ENCODE measurements at regions of chr6 and their contacts with region 1.

Region 1: DNA sequence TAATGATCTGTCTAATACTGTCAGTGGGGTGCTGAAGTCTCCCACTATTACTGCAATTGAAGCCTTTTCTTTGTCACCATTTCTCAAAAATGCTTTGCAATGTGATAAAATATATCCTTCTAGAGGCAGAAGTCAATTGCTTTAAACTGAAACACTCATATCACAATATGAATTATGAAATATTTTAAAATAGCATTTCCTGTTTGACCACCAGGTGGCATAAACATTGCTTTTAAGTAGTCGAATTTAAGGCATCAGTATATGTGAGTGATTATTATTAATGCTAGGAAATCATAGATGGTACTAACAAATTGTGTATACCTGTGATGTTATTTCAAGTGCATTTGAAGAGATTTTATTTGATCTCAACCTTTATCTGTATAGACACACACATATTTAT is 87.5 kb downstream of the MEI4 start:
- DNase-seq: peak; percentile 8
- ATAC-seq: no peak; the same call in 1 of the 2 replicates
- H3K4me3 ChIP-seq: no peak overlapping the region
- H3K27ac ChIP-seq: no peak overlapping the region
- H3K4me1 ChIP-seq: no peaks in the 10 kb centered on the region
- H3K27me3 ChIP-seq: no peaks in the 10 kb centered on the region
- CTCF ChIP-seq: peak; percentile 49
- POLR2A ChIP-seq: no peak
- RAD21 ChIP-seq: peak; percentile 44

Region 2: GRCh38 chr6:77822265-77822664 is 81.9 kb after region 1 on chr6:
- CTCF ChIA-PET with region 1: no interaction called
- POLR2A ChIA-PET with region 1: no interaction called
- dilution Hi-C with region 1: no loop called
- in situ Hi-C with region 1: no loop called
- intact Hi-C with region 1: no loop called
- DNase-seq: no peak
- ATAC-seq: no peak
- H3K4me3 ChIP-seq: no peak overlapping the region
- H3K27ac ChIP-seq: no peak overlapping the region
- H3K4me1 ChIP-seq: no peaks in the 10 kb centered on the region
- H3K27me3 ChIP-seq: no peaks in the 10 kb centered on the region
- CTCF ChIP-seq: no peak
- POLR2A ChIP-seq: no peak
- RAD21 ChIP-seq: no peak

Region 3: DNA sequence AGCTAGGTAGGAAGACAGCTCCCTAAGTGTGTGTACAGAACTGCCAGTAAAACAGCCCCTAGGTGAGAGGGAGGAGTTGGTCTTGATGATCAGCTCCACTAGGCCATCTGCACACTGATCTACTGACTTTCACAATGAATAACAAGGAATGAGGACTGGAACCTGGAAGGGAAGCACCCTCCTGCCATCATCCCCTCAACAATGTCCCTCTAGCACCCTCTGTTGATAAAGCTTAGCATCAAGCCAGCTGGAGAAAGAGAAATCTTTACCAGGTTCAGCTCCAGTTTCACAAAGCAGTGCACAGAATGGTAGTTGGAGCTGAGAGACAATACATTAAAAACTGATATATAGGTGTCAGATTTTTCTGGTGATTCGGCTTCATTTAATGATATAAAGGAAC is 1069.8 kb after region 1 on chr6:
- CTCF ChIA-PET with region 1: interaction called, 3 read pairs
- POLR2A ChIA-PET with region 1: no interaction called
- dilution Hi-C with region 1: no loop called
- in situ Hi-C with region 1: loop called (anchors 25 kb)
- intact Hi-C with region 1: loop called (anchors 1 kb)
- DNase-seq: peak; percentile 50
- ATAC-seq: peak; percentile 89
- H3K4me3 ChIP-seq: no peak overlapping the region
- H3K27ac ChIP-seq: no peak overlapping the region
- H3K4me1 ChIP-seq: no peaks in the 10 kb centered on the region
- H3K27me3 ChIP-seq: no peaks in the 10 kb centered on the region
- CTCF ChIP-seq: peak; percentile 77
- POLR2A ChIP-seq: no peak
- RAD21 ChIP-seq: peak; percentile 87

Measured in IMR-90 (cell line).